ENCODE measurements at regions of chr11 and their contacts with region 1.

Region 1: GRCh38 chr11:35144136-35144741 is 5.3 kb downstream of the CD44 start:
- DNase-seq: peak; percentile 81
- H3K4me3 ChIP-seq: peak overlapping the region; percentile 17
- H3K27ac ChIP-seq: peak overlapping the region; percentile 38
- H3K4me1 ChIP-seq: peaks cover 28% of the 10 kb centered on the region
- CTCF ChIP-seq: no peak

Region 2: GRCh38 chr11:35058669-35059434 is 85.4 kb before region 1 on chr11:
- CTCF ChIA-PET with region 1: no interaction called
- POLR2A ChIA-PET with region 1: interaction called, 3 read pairs
- intact Hi-C with region 1: loop called (anchors 1 kb)
- DNase-seq: peak; percentile 59
- H3K4me3 ChIP-seq: peak overlapping the region; percentile 35
- H3K27ac ChIP-seq: peak overlapping the region; percentile 40
- H3K4me1 ChIP-seq: peaks cover 21% of the 10 kb centered on the region
- CTCF ChIP-seq: no peak

Region 3: DNA sequence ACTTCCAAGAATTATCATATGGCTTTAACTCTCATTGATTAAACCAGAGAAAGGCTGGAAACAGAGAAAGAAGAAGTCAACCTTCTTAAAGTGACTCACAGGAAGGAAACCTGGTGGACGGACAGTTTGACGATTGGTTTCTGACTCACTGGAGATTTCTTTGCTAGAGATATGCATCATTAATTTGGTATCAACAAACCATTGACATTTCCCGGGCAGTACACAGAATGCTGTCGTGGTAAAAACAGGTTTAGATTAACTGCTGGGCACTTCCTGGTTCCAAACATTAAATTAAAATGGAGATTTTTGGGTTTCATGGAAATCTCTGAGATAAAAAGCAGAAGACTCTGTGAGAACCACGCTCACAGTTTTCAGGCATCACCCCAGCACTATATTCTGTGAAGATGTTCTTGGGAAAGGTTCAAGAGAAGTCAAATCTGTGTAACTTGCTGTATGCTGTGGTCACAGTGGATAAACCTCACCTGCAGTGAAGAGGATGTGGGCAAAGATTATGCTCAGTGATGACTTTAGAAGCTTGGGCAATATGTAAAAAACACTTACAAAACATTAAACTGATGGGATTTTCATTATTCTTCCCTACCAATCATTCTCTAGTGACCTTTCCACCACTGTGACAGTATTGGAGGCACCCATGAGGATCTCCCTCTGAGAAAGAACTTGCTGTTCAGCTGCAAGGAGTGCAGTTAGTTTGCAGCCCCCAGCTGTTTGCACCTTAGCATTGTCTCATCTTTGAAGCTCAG is 66.3 kb before region 1 on chr11:
- CTCF ChIA-PET with region 1: no interaction called
- POLR2A ChIA-PET with region 1: interaction called, 4 read pairs
- intact Hi-C with region 1: loop called (anchors 1 kb)
- DNase-seq: peak; percentile 85
- H3K4me3 ChIP-seq: peak overlapping the region; percentile 35
- H3K27ac ChIP-seq: peak overlapping the region; percentile 89
- H3K4me1 ChIP-seq: peaks cover 50% of the 10 kb centered on the region
- CTCF ChIP-seq: no peak

Region 4: GRCh38 chr11:35106595-35106994 is 37.6 kb before region 1 on chr11:
- CTCF ChIA-PET with region 1: no interaction called
- POLR2A ChIA-PET with region 1: no interaction called
- intact Hi-C with region 1: loop called (anchors 2 kb)
- DNase-seq: peak; percentile 84
- H3K4me3 ChIP-seq: peak overlapping the region; percentile 35
- H3K27ac ChIP-seq: peak overlapping the region; percentile 84
- H3K4me1 ChIP-seq: peaks cover 55% of the 10 kb centered on the region
- CTCF ChIP-seq: no peak

Region 5: GRCh38 chr11:35116762-35117640 is 27.2 kb before region 1 on chr11:
- CTCF ChIA-PET with region 1: interaction called, 4 read pairs
- POLR2A ChIA-PET with region 1: interaction called, 6 read pairs
- intact Hi-C with region 1: loop called (anchors 1 kb)
- DNase-seq: no peak
- H3K4me3 ChIP-seq: no peak overlapping the region
- H3K27ac ChIP-seq: no peak overlapping the region
- H3K4me1 ChIP-seq: peaks cover 84% of the 10 kb centered on the region
- CTCF ChIP-seq: no peak

Region 6: GRCh38 chr11:35237860-35238715 is 93.8 kb after region 1 on chr11:
- CTCF ChIA-PET with region 1: no interaction called
- POLR2A ChIA-PET with region 1: no interaction called
- intact Hi-C with region 1: loop called (anchors 2 kb)
- DNase-seq: peak; percentile 83
- H3K4me3 ChIP-seq: no peak overlapping the region
- H3K27ac ChIP-seq: no peak overlapping the region
- H3K4me1 ChIP-seq: peaks cover 12% of the 10 kb centered on the region
- CTCF ChIP-seq: peak; percentile 99

Region 7: GRCh38 chr11:35579557-35580396 is 435.5 kb after region 1 on chr11:
- CTCF ChIA-PET with region 1: no interaction called
- POLR2A ChIA-PET with region 1: no interaction called
- intact Hi-C with region 1: no loop called
- DNase-seq: no peak
- H3K4me3 ChIP-seq: no peak overlapping the region
- H3K27ac ChIP-seq: no peak overlapping the region
- H3K4me1 ChIP-seq: no peaks in the 10 kb centered on the region
- CTCF ChIP-seq: no peak